ENCODE measurements at regions of chr10 and their contacts with region 1.

Region 1: GRCh38 chr10:63268798-63269503 is 135.8 kb downstream of the NRBF2 start:
- DNase-seq: peak; percentile 81
- H3K4me3 Mint-ChIP-seq: peak overlapping the region; percentile 95
- H3K27ac Mint-ChIP-seq: peak overlapping the region; percentile 98
- H3K4me1 Mint-ChIP-seq: peaks cover 31% of the 10 kb centered on the region
- H3K27me3 Mint-ChIP-seq: no peaks in the 10 kb centered on the region

Region 2: DNA sequence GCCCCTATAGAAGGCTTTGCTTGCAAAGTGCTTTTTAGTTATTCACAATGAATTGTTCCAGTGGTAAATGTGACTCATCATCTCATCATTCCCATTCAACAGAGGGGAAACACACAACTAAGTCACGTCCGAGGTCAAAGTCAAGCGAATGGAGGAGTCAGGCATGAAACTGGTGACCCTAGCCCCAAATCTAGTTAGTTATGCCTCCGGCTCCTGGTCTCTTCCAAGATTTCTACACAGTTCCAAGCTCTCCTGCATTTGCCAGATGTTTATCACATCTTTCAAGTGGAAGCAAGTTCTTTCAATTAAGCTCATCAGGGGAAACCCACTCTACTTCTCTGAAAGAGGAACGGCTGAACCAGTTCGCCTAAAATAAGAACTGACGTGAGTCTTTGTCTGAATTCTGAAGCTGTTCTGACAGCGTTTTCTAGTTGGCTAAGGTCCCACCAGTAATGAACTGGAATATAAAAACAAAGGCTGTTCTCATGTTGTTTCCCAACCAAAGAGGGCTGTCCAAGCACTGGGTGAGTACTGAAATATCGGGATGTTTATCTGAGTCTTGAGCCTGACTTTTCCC is 276.7 kb before region 1 on chr10:
- intact Hi-C with region 1: loop called (anchors 5 kb)
- DNase-seq: no peak
- H3K4me3 Mint-ChIP-seq: peak overlapping the region; percentile 58
- H3K27ac Mint-ChIP-seq: peak overlapping the region; percentile 94
- H3K4me1 Mint-ChIP-seq: peaks cover 52% of the 10 kb centered on the region
- H3K27me3 Mint-ChIP-seq: peaks cover 4% of the 10 kb centered on the region

Region 3: GRCh38 chr10:63217120-63217605 is 51.8 kb before region 1 on chr10:
- intact Hi-C with region 1: loop called (anchors 1 kb)
- DNase-seq: no peak
- H3K4me3 Mint-ChIP-seq: no peak overlapping the region
- H3K27ac Mint-ChIP-seq: peak overlapping the region; percentile 13
- H3K4me1 Mint-ChIP-seq: peaks cover 51% of the 10 kb centered on the region
- H3K27me3 Mint-ChIP-seq: no peaks in the 10 kb centered on the region

Region 4: GRCh38 chr10:63355682-63356081 is 86.7 kb after region 1 on chr10:
- intact Hi-C with region 1: loop called (anchors 1 kb)
- DNase-seq: no peak
- H3K4me3 Mint-ChIP-seq: no peak overlapping the region
- H3K27ac Mint-ChIP-seq: peak overlapping the region; percentile 54
- H3K4me1 Mint-ChIP-seq: peaks cover 14% of the 10 kb centered on the region
- H3K27me3 Mint-ChIP-seq: no peaks in the 10 kb centered on the region

Region 5: DNA sequence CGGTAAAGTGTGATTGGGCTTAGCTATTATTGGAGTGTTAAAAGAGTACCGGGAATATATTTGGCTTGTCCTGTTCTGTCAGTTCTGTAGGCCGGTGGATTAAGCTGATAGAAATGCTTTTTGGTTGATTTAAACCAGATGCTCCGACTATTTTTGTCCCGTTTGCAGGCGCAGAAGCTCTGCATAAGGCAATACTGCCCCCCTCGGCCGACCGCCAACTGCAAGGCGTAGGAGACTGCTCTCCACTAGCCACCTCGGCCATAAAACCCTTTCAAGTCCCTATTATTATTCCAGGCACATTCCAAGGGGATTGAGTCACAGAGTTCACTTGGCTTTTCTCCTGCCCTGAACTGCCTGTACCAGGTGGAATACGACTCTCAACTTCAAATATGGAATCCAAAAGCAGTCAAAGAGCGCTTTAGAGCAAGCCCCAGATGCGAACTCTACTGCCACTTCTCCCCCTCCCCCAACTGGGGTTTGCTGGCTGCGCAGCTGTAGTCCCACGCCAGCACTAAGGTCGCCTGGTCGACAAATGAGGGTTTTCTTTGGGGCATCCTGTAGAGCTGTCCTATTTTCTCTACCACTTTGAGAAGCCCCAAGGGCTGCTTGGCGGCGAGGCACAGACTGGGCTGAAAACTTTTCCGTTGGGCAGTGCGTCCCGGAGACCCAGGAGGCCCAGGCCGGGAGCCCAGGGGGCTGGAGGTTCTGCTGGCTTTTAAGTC is 360.6 kb after region 1 on chr10:
- intact Hi-C with region 1: loop called (anchors 1 kb)
- DNase-seq: peak; percentile 71
- H3K4me3 Mint-ChIP-seq: peak overlapping the region; percentile 89
- H3K27ac Mint-ChIP-seq: peak overlapping the region; percentile 90
- H3K4me1 Mint-ChIP-seq: peaks cover 37% of the 10 kb centered on the region
- H3K27me3 Mint-ChIP-seq: no peaks in the 10 kb centered on the region